ENCODE measurements at regions of chr1 and their contacts with region 1.

Region 1: DNA sequence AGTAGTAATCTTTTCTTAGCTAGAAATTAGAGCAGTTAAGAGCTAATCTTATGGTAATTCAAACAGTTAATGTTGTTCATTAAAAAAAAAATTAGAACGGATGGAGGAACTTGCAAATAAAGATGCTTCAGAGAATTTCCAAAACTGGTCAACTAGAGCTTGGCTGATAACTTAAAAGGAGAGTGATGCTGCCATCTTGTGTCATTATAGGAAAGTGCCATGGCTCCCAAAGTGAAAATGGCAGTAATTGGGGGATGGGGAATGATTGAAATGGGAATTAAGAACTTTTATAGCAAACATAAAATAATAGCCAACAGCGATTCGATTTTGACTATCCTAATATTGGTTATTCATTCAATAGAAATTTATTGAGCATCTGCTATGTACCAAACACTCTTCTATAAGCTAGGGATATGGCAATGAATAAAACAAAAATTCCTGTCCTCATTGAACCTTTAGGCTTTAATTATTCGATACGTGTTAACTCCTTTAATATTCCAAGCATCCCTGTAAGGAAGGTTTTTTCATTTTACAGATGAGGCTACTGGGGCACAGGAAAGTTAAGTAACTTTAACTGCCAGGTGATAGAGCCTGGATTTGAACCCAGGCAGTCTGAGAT is 5.7 kb upstream of the PLPP3 start:
- DNase-seq: no peak
- H3K4me3 ChIP-seq: no peak overlapping the region
- H3K27ac ChIP-seq: no peak overlapping the region
- H3K4me1 ChIP-seq: peaks cover 0 to 3% (median 2%) of the 10 kb centered on the region in 4 donors
- H3K27me3 ChIP-seq: no peaks in the 10 kb centered on the region
- CTCF ChIP-seq: peak; percentile 74 to 88 (median 82)
- EP300 ChIP-seq: no peak
- POLR2A ChIP-seq: no peak

Region 2: GRCh38 chr1:55140546-55140983 is 1444.5 kb before region 1 on chr1:
- intact Hi-C with region 1: loop called (anchors 5 kb)
- DNase-seq: peak; percentile 87
- H3K4me3 ChIP-seq: no peak overlapping the region
- H3K27ac ChIP-seq: peak overlapping the region in 2 of 4 donors; percentile 42 to 56
- H3K4me1 ChIP-seq: peaks cover 0 to 11% (median 0%) of the 10 kb centered on the region in 4 donors
- H3K27me3 ChIP-seq: no peaks in the 10 kb centered on the region
- CTCF ChIP-seq: peak; percentile 67 to 82 (median 78)
- EP300 ChIP-seq: peak in 1 of 4 donors; percentile 28
- POLR2A ChIP-seq: no peak

Region 3: GRCh38 chr1:55284852-55285251 is 1300.2 kb before region 1 on chr1:
- intact Hi-C with region 1: loop called (anchors 1 kb)
- DNase-seq: peak; percentile 76
- H3K4me3 ChIP-seq: no peak overlapping the region
- H3K27ac ChIP-seq: no peak overlapping the region
- H3K4me1 ChIP-seq: no peaks in the 10 kb centered on the region
- H3K27me3 ChIP-seq: no peaks in the 10 kb centered on the region
- CTCF ChIP-seq: peak; percentile 53 to 70 (median 60)
- EP300 ChIP-seq: no peak
- POLR2A ChIP-seq: no peak

Region 4: DNA sequence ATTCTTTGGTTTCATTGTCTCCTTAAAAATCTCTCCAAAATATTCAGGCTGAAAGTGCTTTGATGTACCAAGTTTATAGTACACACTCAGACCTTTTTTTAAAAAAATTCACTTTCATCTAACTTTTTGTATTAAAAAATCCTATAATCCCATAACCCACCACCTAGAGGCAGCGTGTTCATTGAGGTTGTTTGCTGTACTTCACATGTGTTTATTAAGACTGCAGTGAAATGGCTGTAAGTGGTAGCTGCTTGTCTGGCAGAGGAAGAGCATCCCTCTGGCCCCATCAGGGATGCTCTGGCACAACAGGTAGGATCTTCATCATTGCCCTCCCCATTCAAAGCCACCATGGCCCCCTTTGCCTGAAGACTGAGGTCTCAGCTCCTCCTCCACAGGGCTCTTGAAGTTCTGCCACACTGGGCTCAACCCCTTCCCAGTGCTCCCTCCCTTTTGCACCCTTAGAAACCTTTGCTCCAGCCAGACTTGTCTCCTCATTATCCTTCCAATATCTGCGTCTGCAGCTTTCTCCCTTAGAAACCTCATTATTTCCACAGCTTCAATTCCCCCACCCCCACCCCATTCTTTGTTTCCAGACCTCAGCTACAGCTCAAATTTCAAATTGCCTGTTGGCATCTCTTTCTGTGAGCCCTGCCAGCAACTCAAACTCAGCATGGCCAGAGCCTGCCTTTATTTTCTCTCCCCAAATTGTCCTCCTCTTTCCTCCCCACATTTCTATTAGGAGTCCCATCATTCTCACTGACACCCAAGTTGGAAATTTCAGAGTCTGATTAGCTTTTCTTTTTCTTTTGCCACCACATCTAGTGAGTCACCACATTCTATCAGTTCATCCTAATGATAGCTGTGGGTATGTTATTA is 1000.3 kb before region 1 on chr1:
- intact Hi-C with region 1: loop called (anchors 5 kb)
- DNase-seq: no peak
- H3K4me3 ChIP-seq: no peak overlapping the region
- H3K27ac ChIP-seq: peak overlapping the region in 2 of 4 donors; percentile 1 to 33
- H3K4me1 ChIP-seq: peaks cover 0 to 33% (median 17%) of the 10 kb centered on the region in 4 donors
- H3K27me3 ChIP-seq: no peaks in the 10 kb centered on the region
- CTCF ChIP-seq: no peak
- EP300 ChIP-seq: no peak
- POLR2A ChIP-seq: no peak